ENCODE measurements at regions of chr13 and their contacts with region 1.

Region 1: DNA sequence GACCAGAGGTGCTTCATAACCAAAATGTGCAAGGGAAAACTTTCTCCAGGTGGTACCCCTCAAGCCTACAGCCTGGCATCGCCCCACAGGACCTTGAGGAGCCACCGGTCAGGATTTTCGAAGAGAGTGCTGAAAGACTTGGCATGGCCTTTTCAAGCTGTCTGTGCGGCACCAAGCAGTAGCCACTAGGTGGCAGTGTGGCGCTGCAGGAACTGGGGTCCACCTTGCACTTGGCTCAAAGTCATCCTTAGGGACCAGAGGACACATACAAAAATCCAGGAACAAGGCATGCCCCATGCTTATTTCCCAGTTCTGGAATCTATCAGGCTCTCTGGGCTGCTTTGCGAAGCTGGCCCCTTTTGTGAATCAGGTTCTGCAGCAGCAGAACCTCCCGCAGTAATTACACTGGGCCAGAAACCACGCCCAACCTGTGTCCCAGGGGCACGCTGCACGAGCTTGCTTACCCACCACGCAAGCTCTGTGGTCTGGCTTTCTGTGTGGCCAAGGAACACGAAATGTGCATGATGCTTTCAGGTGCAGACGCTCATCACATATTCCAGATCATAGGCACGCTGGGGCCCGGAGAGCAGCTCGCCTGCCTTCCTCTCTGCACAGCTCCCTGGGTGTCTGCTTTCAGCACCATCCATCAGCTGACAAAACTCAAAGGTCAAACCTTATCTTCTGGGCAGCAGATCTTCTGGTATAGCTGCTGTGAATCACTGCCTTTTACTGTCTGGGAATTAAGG is 87.2 kb downstream of the SLC7A1 start:
- DNase-seq: peak; percentile 62
- ATAC-seq: peak; percentile 85
- H3K4me3 Mint-ChIP-seq: no peak overlapping the region
- H3K27ac Mint-ChIP-seq: peak overlapping the region; percentile 46
- H3K4me1 Mint-ChIP-seq: peaks cover 5% of the 10 kb centered on the region
- H3K27me3 Mint-ChIP-seq: peaks cover 17% of the 10 kb centered on the region
- CTCF ChIP-seq: peak; percentile 73

Region 2: DNA sequence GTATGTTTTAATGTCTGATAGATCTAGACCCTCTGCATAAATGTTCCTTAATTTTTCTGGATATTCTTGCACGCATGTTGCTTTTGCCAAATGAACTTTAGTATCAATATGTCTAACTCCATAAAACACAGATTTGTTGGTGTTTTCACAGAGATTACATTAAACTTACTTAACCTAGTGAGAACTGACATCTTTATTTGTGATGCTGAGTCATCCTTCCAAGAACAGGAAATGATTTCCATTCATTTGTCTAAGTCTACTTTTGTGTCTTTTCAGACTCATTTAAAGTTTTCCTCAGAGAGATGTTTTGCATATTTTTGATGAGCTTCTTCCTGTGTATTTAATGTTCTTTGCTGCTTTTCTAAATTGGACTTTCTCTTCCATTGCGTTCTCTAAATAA is 96.8 kb before region 1 on chr13:
- CTCF ChIA-PET with region 1: no interaction called
- POLR2A ChIA-PET with region 1: no interaction called
- intact Hi-C with region 1: no loop called
- DNase-seq: no peak
- ATAC-seq: no peak
- H3K4me3 Mint-ChIP-seq: no peak overlapping the region
- H3K27ac Mint-ChIP-seq: no peak overlapping the region
- H3K4me1 Mint-ChIP-seq: no peaks in the 10 kb centered on the region
- H3K27me3 Mint-ChIP-seq: peaks cover 5% of the 10 kb centered on the region
- CTCF ChIP-seq: no peak

Region 3: DNA sequence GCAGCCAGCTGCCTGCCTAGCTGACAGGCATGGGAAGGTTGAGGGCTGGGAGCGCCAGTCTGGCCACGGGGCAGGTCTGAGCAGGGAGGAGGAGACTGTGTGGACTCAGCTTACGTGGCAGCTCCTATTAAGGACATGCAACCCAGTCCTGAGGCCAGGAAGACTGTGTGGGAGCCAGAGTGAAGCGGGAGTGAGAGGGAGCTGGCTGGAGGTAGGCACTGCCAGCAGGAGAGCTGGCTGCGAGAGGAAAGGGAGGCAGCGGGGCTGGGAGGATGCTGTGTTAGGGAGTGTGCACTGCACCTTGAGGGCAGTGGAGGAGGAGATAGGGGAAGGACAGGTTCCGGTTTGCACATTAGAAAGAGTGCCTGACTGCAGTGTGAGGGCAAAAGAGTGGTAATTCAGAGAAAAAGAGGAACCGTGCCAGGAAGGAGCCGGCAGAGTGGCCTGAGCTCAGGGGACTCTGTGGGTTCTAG is 12.0 kb before region 1 on chr13:
- CTCF ChIA-PET with region 1: interaction called, 22 read pairs
- POLR2A ChIA-PET with region 1: no interaction called
- intact Hi-C with region 1: loop called (anchors 2 kb)
- DNase-seq: peak; percentile 38
- ATAC-seq: peak; percentile 70
- H3K4me3 Mint-ChIP-seq: peak overlapping the region; percentile 71
- H3K27ac Mint-ChIP-seq: peak overlapping the region; percentile 68
- H3K4me1 Mint-ChIP-seq: peaks cover 36% of the 10 kb centered on the region
- H3K27me3 Mint-ChIP-seq: no peaks in the 10 kb centered on the region
- CTCF ChIP-seq: no peak

Region 4: DNA sequence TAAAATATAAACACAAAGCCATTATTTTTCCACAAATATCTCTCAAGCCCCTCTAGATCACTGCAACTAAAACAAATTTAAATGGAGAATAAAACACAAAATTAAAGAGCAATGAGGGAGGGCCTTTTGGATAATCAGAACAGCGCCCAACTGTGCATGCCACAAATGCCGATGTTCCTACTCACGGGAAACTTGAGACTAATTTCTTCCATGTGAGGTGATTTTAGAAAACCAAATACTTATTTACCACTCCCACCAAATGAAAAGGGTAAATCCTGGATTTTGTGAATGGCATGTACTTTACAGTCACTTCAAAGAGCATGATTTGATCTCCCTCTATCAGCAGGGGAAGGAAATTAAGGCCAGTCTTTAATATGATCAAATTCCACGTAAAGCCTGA is 12.4 kb after region 1 on chr13:
- CTCF ChIA-PET with region 1: interaction called, 18 read pairs
- POLR2A ChIA-PET with region 1: no interaction called
- intact Hi-C with region 1: no loop called
- DNase-seq: no peak
- ATAC-seq: no peak
- H3K4me3 Mint-ChIP-seq: no peak overlapping the region
- H3K27ac Mint-ChIP-seq: no peak overlapping the region
- H3K4me1 Mint-ChIP-seq: no peaks in the 10 kb centered on the region
- H3K27me3 Mint-ChIP-seq: no peaks in the 10 kb centered on the region
- CTCF ChIP-seq: no peak

Region 5: GRCh38 chr13:29707876-29708543 is 199.7 kb after region 1 on chr13:
- CTCF ChIA-PET with region 1: interaction called, 20 read pairs
- POLR2A ChIA-PET with region 1: no interaction called
- intact Hi-C with region 1: loop called (anchors 1 kb)
- DNase-seq: no peak
- ATAC-seq: peak; percentile 40
- H3K4me3 Mint-ChIP-seq: no peak overlapping the region
- H3K27ac Mint-ChIP-seq: no peak overlapping the region
- H3K4me1 Mint-ChIP-seq: no peaks in the 10 kb centered on the region
- H3K27me3 Mint-ChIP-seq: peaks cover 21% of the 10 kb centered on the region
- CTCF ChIP-seq: no peak

Region 6: DNA sequence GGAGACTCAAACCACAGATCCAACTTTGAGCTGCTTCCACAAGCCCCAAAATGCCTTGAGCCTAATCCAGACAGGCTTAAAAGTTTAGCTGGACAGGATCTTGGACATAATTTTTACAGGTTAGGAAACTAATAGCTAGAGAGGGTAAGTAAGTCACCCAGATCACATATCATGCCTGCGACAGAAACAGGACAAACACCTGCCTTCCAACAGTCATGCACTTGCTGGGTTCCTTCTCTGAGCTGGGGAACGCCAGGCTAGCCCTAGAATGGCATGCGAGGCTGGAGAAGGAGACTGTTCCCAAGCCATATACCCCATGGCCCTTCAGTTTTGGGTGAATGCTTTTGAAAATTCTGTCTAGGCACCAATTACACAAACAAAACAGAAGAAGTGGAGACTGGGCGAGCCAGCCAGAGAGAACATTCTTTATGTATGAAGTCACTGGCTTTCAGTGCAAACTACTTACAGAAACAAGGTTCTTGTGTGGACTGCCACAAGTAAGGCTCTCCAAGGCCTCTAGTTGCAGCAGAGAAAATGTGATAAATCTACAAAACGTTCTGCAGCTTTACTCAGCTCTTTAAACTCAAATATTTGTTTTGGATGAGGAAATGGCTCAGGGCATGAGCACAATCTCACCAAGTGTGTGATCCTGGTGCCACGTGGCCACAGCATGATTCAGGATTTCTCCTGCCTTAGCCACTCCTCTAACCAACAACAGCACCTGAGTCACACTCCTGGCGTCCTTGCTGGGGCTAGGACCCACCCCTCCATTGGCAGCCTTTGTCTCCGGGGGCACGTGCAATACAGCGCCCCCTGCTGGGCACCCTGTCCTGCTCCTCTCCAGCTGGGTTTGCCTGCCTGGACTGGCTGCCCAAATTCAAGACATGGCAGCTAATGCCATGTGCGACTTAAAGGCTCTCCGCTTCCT is 415.5 kb after region 1 on chr13:
- CTCF ChIA-PET with region 1: interaction called, 24 read pairs
- POLR2A ChIA-PET with region 1: no interaction called
- intact Hi-C with region 1: loop called (anchors 2 kb)
- DNase-seq: peak; percentile 40
- ATAC-seq: peak; percentile 65
- H3K4me3 Mint-ChIP-seq: no peak overlapping the region
- H3K27ac Mint-ChIP-seq: no peak overlapping the region
- H3K4me1 Mint-ChIP-seq: no peaks in the 10 kb centered on the region
- H3K27me3 Mint-ChIP-seq: peaks cover 5% of the 10 kb centered on the region
- CTCF ChIP-seq: peak; percentile 85

Measured in activated B cell treated with CpG ODN at 0.5 μM for 24 hours (primary cell).